Activated T-helper 2 cell treated with anti-CD3 and anti-CD28 coated beads, Interferon-gamma antibody, Interleukin-2, Interleukin-4, amounts not matched to agents 10 μg/mL and 5 μg/mL and 100 μg/mL, durations not matched to agents 14 hours and 24 hours and 36 hours (primary cell): ENCODE measurements at regions of chr5 and their contacts with region 1.

Region 1: DNA sequence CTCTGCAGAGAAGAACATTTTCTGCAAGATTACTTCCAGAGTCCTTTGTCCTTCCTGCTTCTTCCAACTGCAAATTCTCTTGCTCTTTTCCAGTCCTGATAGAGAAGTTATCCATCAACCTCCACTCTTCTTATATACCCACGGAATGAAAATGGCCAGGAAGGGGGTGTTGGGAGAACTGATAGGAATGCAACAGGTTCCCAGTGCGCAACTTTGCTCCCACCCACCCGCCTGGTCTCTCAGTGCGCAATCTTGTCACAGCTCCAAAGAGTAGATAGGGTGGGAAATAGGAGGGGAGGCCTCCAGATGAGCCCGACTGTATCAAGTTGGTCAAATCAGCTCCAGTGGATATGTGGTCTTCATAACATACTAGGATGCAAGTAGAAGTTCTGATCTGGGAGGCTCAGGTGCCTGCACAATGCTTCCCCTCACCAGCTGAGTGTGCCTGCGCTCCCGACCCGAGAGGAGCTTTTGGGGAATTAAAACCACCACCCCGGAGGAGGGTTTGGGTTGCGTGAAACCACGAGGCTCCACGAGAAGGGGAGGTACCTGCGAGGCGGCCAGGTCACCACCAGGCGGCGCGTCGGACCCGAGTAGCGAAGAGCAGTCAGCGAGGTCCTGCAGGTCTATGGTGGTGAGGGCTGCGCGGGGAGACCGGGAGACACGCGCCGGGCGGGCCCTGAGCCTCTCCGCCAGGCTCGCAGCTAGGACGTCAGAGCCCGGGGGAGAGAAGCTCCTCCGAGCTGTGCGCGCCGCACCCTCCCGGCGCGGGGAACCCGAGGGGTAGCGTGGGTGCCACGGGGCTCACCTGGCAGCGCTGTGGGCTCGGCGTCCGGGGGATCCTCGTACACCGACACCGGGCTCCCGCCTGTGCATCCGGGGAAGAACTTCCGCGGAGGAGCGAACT is 835 bp downstream of the MCIDAS start:
- DNase-seq: peak; percentile 50
- H3K4me3 Mint-ChIP-seq: peak overlapping the region; percentile 50
- H3K27ac Mint-ChIP-seq: no peak overlapping the region
- H3K4me1 Mint-ChIP-seq: peaks cover 29% of the 10 kb centered on the region
- H3K27me3 Mint-ChIP-seq: peaks cover 83% of the 10 kb centered on the region

Region 2: GRCh38 chr5:54883374-54884212 is 342.7 kb before region 1 on chr5:
- intact Hi-C with region 1: loop called (anchors 10 kb)
- DNase-seq: no peak
- H3K4me3 Mint-ChIP-seq: peak overlapping the region; percentile 67
- H3K27ac Mint-ChIP-seq: no peak overlapping the region
- H3K4me1 Mint-ChIP-seq: peaks cover 16% of the 10 kb centered on the region
- H3K27me3 Mint-ChIP-seq: peaks cover 78% of the 10 kb centered on the region

Region 3: DNA sequence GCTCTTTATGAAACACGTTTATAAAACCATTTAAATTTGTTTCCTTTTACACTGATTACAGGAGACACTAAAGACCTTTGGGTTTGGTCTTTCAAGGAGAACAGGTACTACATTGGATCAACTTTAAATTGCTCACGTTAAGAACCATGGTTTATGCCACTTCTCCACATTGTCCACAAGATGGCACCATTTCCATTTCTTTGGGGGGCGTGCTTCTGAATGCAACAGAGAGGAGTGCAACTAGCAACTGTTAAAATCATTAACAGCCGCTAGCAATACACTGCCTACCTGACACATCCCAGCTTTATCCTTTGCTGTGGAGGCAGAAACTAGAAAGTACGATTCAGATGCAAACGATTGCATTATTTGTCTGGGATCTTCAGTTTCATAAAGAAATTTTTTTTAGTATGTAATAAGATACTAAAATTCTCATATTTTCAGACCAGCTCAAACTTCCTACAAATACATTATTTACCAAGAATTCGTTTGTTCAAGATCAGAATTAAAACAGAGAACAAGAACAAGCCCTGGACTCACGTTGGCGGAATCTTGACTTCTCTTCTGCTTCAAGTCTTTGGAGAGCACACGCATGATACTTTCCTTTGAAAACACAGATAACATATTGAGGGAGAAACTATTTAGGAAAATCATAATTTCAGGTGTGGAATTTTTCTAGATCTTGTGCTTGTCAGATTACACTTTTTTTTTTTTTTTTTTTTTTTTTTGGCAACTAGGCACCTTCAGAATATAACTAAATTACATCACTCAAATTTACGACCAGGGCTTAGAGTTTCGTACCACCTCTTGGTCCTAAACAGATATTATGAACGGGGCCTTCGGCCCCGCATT is 54.0 kb before region 1 on chr5:
- intact Hi-C with region 1: loop called (anchors 1 kb)
- DNase-seq: peak; percentile 60
- H3K4me3 Mint-ChIP-seq: peak overlapping the region; percentile 86
- H3K27ac Mint-ChIP-seq: peak overlapping the region; percentile 36
- H3K4me1 Mint-ChIP-seq: peaks cover 34% of the 10 kb centered on the region
- H3K27me3 Mint-ChIP-seq: peaks cover 66% of the 10 kb centered on the region